ENCODE measurements at regions of chr16 and their contacts with region 1.

Region 1: DNA sequence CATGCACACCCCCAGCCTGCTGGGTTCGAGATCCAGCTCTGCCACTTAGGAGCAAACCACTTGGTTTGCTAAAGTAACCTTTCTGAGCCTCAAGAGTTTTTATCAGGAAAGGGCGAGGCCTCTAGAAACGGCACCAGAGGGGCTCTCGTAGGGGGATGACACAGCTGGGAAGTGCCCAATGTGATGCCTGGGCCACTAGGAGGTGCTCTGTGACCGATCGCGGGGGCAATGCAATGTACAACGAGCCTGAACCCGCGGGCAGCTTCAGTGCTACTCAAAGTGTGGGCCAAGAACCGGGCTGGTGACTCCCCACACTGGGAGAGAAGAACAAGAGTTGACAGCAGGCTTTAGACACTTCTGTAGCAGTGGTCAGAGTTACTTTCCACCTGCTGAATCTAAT is 9.4 kb downstream of the C16orf89 start:
- H3K4me3 ChIP-seq: no peak overlapping the region
- H3K27ac ChIP-seq: no peak overlapping the region
- H3K4me1 ChIP-seq: no peaks in the 10 kb centered on the region
- CTCF ChIP-seq: no peak

Region 2: DNA sequence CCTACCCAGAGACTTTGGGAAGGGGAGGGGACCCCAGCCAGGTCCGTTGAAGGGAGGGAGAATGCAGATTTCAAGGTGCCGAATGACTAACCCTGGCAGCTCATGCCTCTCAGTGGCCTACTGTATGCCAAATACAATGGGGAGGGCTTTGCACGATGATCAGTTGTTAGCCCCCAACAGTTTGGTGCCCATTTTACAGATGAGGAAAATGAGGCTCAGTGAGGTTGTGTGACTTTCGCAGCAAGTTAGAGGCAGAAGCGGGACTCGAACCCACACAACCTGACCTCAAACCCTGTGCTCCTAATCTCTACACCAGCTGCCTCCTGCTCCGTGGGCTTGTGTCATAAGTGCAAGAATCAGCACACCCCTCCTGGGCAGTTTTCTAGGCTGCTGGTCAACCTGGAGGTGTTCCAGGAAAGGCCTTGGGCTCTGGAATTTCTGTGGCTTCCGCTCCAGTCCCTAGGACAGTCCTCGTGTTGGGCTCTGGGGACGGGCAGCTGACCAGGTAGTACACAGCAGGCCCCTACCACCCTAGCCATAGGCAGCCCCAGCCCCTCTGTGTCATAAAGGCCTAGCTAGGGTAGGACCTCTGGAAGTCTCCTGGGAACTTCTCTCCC is 10.7 kb before region 1 on chr16:
- CTCF ChIA-PET with region 1: interaction called, 12 read pairs
- POLR2A ChIA-PET with region 1: no interaction called
- H3K4me3 ChIP-seq: no peak overlapping the region
- H3K27ac ChIP-seq: no peak overlapping the region
- H3K4me1 ChIP-seq: no peaks in the 10 kb centered on the region; the same call in 1 of the 2 replicates
- CTCF ChIP-seq: no peak

Measured in HEK293 (cell line).